ENCODE measurements at regions of chr9 and their contacts with region 1.

Region 1: DNA sequence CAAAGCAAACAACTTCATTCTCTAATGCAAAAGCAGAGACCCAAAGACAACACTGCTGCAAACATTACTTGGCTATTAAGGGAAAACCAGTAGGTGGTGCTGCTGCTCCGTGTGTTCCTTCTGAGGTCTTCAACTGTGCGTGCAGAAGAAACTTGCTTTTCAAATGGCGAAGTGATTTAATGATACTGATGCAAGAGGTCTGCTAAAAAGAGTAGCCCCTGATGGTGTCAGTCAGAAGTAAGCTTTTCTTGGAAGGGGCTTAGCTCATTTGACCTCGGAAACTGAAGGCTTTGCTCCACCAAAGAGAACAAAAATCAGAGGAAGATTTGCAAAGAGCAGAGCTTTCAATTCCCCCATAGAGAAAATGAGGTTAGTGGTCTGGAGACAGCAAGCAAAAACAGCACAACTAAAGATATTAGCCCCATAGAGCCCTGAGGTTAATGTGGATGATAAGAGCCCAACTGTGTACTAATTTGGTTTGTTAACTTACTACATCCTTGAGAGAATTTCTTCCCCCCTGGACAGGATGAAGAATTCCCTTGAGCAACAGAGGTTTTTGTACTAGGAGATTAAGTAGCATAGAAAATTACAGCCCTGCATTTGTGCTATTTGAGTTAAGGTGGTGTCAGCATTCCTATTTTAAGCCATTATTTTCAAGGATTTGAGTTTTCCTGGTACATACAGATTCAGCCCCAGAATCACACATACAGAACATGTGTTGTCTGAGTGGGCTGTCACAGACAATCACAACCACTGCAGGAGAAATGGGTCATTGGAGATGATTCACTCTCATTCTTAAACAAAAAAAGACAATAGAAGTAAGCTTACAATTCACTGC is 153.2 kb upstream of the C9orf72 start:
- DNase-seq: peak; percentile 50
- H3K4me3 ChIP-seq: peak overlapping the region; percentile 30 to 38; a peak in 3 of 4 replicates
- H3K27ac ChIP-seq: peak overlapping the region in 1 of 2 experiments; percentile 98; a peak in 2 of 4 replicates
- H3K4me1 ChIP-seq: peaks cover 0 to 12% of the 10 kb centered on the region in 2 experiments; a peak in 2 of 4 replicates
- H3K27me3 ChIP-seq: no peaks in the 10 kb centered on the region
- CTCF ChIP-seq: peak; percentile 89
- EP300 ChIP-seq: peak in 1 of 2 experiments; percentile 87; a peak in 2 of 4 replicates
- RAD21 ChIP-seq: peak; percentile 97

Region 2: GRCh38 chr9:27618066-27618465 is 108.4 kb before region 1 on chr9:
- CTCF ChIA-PET with region 1: no interaction called
- POLR2A ChIA-PET with region 1: no interaction called
- DNase-seq: no peak
- H3K4me3 ChIP-seq: no peak overlapping the region
- H3K27ac ChIP-seq: no peak overlapping the region
- H3K4me1 ChIP-seq: no peaks in the 10 kb centered on the region; a peak in 1 of 4 replicates
- H3K27me3 ChIP-seq: peaks cover 9% of the 10 kb centered on the region
- CTCF ChIP-seq: no peak
- EP300 ChIP-seq: no peak
- RAD21 ChIP-seq: no peak

Region 3: GRCh38 chr9:27714388-27714787 is 12.1 kb before region 1 on chr9:
- CTCF ChIA-PET with region 1: interaction called, 20 read pairs
- POLR2A ChIA-PET with region 1: no interaction called
- DNase-seq: peak; percentile 23
- H3K4me3 ChIP-seq: no peak overlapping the region
- H3K27ac ChIP-seq: no peak overlapping the region
- H3K4me1 ChIP-seq: no peaks in the 10 kb centered on the region; a peak in 1 of 4 replicates
- H3K27me3 ChIP-seq: no peaks in the 10 kb centered on the region
- CTCF ChIP-seq: peak; percentile 24; the same call in 1 of the 2 replicates
- EP300 ChIP-seq: no peak
- RAD21 ChIP-seq: peak; percentile 19; the same call in 1 of the 2 replicates

Region 4: GRCh38 chr9:27743490-27743889 is 17.0 kb after region 1 on chr9:
- CTCF ChIA-PET with region 1: interaction called, 10 read pairs
- POLR2A ChIA-PET with region 1: no interaction called
- DNase-seq: peak; percentile 20
- H3K4me3 ChIP-seq: no peak overlapping the region
- H3K27ac ChIP-seq: peak overlapping the region in 1 of 2 experiments; percentile 69; a peak in 2 of 4 replicates
- H3K4me1 ChIP-seq: peaks cover 0 to 9% of the 10 kb centered on the region in 2 experiments; a peak in 2 of 4 replicates
- H3K27me3 ChIP-seq: no peaks in the 10 kb centered on the region
- CTCF ChIP-seq: no peak
- EP300 ChIP-seq: peak in 1 of 2 experiments; percentile 70; a peak in 1 of 4 replicates
- RAD21 ChIP-seq: no peak; the same call in 1 of the 2 replicates

Region 5: DNA sequence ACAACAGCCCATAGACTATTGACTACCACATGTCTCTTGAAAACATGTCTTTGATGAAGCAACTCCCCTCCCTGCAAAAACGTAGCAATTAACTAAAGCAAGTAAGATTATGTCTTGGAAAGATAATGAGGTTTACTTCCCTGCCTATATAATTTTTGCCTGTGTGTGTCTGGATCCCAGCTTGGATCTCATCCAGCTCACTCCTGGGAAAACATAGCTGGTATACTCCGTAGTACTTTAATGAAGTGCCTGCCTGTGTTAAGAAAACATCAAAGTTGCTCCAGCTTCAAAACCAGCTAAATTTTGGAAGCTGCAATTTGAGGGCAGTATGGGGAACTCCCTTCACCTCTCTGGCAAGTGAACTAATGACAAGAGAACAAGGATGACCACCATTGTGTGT is 29.4 kb after region 1 on chr9:
- CTCF ChIA-PET with region 1: no interaction called
- POLR2A ChIA-PET with region 1: no interaction called
- DNase-seq: no peak
- H3K4me3 ChIP-seq: no peak overlapping the region
- H3K27ac ChIP-seq: no peak overlapping the region
- H3K4me1 ChIP-seq: no peaks in the 10 kb centered on the region; a peak in 1 of 4 replicates
- H3K27me3 ChIP-seq: no peaks in the 10 kb centered on the region
- CTCF ChIP-seq: no peak
- EP300 ChIP-seq: no peak
- RAD21 ChIP-seq: no peak

Region 6: DNA sequence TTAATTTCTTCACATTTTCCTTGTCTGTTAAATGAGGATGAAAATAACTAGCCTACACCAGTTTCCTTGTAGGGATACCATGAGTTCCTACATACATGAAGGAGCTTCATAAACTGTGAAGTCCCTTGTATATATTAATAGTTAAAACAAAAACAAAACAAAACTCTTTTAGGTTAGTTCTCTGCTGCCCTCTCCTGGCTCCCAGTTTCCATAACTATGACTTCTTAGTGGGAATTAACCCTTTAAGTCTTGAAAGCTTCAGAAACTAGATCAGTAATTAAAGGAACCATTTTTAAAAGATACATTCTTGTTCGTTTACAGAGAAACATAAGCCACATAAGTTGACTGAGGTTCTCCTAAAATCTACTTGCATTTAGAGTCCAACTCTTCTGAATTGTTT is 346.8 kb after region 1 on chr9:
- CTCF ChIA-PET with region 1: interaction called, 43 read pairs
- POLR2A ChIA-PET with region 1: no interaction called
- DNase-seq: peak; percentile 3
- H3K4me3 ChIP-seq: no peak overlapping the region; a peak in 1 of 4 replicates
- H3K27ac ChIP-seq: peak overlapping the region in 1 of 2 experiments; percentile 79; a peak in 2 of 4 replicates
- H3K4me1 ChIP-seq: peaks cover 0 to 4% of the 10 kb centered on the region in 2 experiments; a peak in 2 of 4 replicates
- H3K27me3 ChIP-seq: no peaks in the 10 kb centered on the region
- CTCF ChIP-seq: peak; percentile 77
- EP300 ChIP-seq: no peak
- RAD21 ChIP-seq: peak; percentile 81

Region 7: GRCh38 chr9:29211580-29212396 is 1485.3 kb after region 1 on chr9:
- CTCF ChIA-PET with region 1: interaction called, 24 read pairs
- POLR2A ChIA-PET with region 1: interaction called, 3 read pairs
- DNase-seq: peak; percentile 89
- H3K4me3 ChIP-seq: peak overlapping the region; percentile 92 to 96
- H3K27ac ChIP-seq: peak overlapping the region; percentile 73 to 90; a peak in 3 of 4 replicates
- H3K4me1 ChIP-seq: peaks cover 12 to 23% of the 10 kb centered on the region in 2 experiments; a peak in 3 of 4 replicates
- H3K27me3 ChIP-seq: no peaks in the 10 kb centered on the region
- CTCF ChIP-seq: peak; percentile 66
- EP300 ChIP-seq: no peak
- RAD21 ChIP-seq: peak; percentile 64